RWPE1 (cell line): ENCODE measurements at regions of chr2 and their contacts with region 1.

Region 1: DNA sequence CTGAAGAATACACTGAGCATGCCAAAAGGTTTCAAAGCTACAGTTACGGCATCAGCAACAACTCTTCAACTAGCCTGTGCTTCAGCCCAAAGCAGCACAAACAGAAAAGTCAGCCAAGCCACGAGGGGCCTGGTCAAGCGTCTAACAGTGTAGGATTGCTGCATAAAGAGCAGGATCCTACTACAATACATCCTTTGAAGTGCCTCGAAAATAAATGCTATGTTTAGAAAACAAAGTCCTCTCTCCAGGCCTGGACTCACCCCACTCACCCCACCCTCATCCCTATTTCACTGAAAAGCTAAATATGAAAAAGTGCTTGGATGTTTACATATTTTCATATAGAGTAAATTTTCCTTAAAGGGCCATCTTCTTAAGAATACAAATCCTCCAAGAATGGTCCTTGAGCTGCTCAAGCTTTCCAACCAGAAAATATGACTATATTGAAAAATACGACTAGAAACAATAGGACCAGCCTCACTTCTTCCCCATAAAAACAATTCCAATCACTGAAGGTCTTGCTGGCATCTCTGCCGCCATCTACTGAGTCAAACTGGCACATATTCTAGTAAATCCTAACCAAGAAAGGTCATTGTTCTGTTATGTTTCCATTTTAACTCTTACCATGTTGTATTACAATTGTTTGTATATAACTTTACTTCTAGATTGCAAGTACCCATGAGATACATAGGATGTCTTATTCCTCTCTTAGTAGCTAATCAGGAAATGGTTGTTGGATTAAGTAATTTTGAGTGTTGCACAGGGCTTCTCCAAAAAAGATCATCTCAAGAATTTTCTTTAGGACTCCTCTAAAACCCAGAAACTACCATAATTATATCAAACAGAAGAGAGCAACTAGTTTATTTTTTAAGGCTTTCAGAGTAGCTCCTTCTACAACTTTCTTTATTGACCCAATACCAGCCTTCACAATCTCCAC is 63.6 kb downstream of the CLHC1 start:
- DNase-seq: peak; percentile 64
- H3K27ac ChIP-seq: no peak overlapping the region
- CTCF ChIP-seq: peak; percentile 85

Region 2: DNA sequence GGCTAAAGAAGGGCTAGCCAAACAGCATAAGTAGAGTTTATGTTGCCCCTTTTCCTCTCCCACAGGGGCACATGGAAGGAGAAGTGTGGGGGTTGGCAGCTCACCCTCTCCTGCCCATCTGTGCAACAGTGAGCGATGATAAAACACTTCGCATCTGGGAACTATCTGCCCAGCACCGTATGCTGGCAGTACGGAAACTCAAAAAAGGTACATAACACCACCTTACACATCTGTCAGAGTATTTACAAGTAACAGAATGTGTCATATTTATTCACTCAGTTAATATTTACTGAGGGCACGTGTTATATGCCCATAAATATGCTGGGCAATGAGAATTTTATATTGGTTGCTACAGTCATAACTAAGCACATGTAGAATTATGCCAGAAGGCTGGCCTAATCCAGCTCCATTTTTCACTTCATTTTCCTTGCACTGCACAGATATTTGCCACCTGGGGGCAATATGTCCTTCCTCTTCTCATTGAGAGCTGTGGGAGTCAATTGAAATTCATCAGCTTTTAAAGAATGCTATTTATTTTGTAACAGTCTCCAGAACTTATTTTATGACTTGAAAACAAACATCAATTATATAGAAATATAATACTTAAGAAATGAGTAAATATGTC is 268.8 kb before region 1 on chr2:
- CTCF ChIA-PET with region 1: interaction called, 7 read pairs
- POLR2A ChIA-PET with region 1: interaction called, 11 read pairs
- DNase-seq: peak; percentile 26
- H3K27ac ChIP-seq: no peak overlapping the region
- CTCF ChIP-seq: peak; percentile 60

Region 3: GRCh38 chr2:55049043-55049793 is 119.3 kb before region 1 on chr2:
- CTCF ChIA-PET with region 1: interaction called, 12 read pairs
- POLR2A ChIA-PET with region 1: no interaction called
- DNase-seq: peak; percentile 57
- H3K27ac ChIP-seq: peak overlapping the region; percentile 99
- CTCF ChIP-seq: peak; percentile 82